CD14-positive monocyte (primary cell): ENCODE measurements at regions of chr15 and their contacts with region 1.

Region 1: GRCh38 chr15:87193481-87193880 is 1063.1 kb downstream of the NTRK3 start:
- DNase-seq: no peak
- H3K4me3 ChIP-seq: no peak overlapping the region
- H3K4me3 Mint-ChIP-seq: no peak overlapping the region
- H3K27ac ChIP-seq: no peak overlapping the region
- H3K27ac Mint-ChIP-seq: no peak overlapping the region
- H3K4me1 ChIP-seq: no peaks in the 10 kb centered on the region
- H3K4me1 Mint-ChIP-seq: no peaks in the 10 kb centered on the region
- H3K27me3 ChIP-seq: no peaks in the 10 kb centered on the region
- H3K27me3 Mint-ChIP-seq: no peaks in the 10 kb centered on the region
- CTCF ChIP-seq: no peak

Region 2: GRCh38 chr15:87154767-87155166 is 38.7 kb before region 1 on chr15:
- intact Hi-C with region 1: no loop called
- DNase-seq: no peak
- H3K4me3 ChIP-seq: no peak overlapping the region
- H3K4me3 Mint-ChIP-seq: no peak overlapping the region
- H3K27ac ChIP-seq: no peak overlapping the region
- H3K27ac Mint-ChIP-seq: no peak overlapping the region
- H3K4me1 ChIP-seq: no peaks in the 10 kb centered on the region
- H3K4me1 Mint-ChIP-seq: no peaks in the 10 kb centered on the region
- H3K27me3 ChIP-seq: no peaks in the 10 kb centered on the region
- H3K27me3 Mint-ChIP-seq: peaks cover 0 to 2% (median 0%) of the 10 kb centered on the region in 3 donors
- CTCF ChIP-seq: no peak

Region 3: GRCh38 chr15:87245592-87245991 is 52.1 kb after region 1 on chr15:
- intact Hi-C with region 1: loop called in 1 of 2 experiments (anchors 10 kb)
- DNase-seq: no peak
- H3K4me3 ChIP-seq: no peak overlapping the region
- H3K4me3 Mint-ChIP-seq: no peak overlapping the region
- H3K27ac ChIP-seq: no peak overlapping the region
- H3K27ac Mint-ChIP-seq: no peak overlapping the region
- H3K4me1 ChIP-seq: no peaks in the 10 kb centered on the region
- H3K4me1 Mint-ChIP-seq: no peaks in the 10 kb centered on the region
- H3K27me3 ChIP-seq: no peaks in the 10 kb centered on the region
- H3K27me3 Mint-ChIP-seq: no peaks in the 10 kb centered on the region
- CTCF ChIP-seq: no peak